ENCODE measurements at regions of chr4 and their contacts with region 1.

Region 1: GRCh38 chr4:99563310-99564186 is at the start of gene TRMT10A:
- DNase-seq: peak; percentile 98
- ATAC-seq: peak; percentile 89
- H3K4me3 Mint-ChIP-seq: peak within 1 kb of the TSS; percentile 90
- H3K27ac Mint-ChIP-seq: peak within 1 kb of the TSS; percentile 98
- H3K4me1 Mint-ChIP-seq: peaks cover 8% of the 10 kb centered on the region
- H3K27me3 Mint-ChIP-seq: peaks cover 12% of the 10 kb centered on the region
- CTCF ChIP-seq: no peak
- total RNA-seq, gene TRMT10A: 7.7 to 8.0 TPM

Region 2: DNA sequence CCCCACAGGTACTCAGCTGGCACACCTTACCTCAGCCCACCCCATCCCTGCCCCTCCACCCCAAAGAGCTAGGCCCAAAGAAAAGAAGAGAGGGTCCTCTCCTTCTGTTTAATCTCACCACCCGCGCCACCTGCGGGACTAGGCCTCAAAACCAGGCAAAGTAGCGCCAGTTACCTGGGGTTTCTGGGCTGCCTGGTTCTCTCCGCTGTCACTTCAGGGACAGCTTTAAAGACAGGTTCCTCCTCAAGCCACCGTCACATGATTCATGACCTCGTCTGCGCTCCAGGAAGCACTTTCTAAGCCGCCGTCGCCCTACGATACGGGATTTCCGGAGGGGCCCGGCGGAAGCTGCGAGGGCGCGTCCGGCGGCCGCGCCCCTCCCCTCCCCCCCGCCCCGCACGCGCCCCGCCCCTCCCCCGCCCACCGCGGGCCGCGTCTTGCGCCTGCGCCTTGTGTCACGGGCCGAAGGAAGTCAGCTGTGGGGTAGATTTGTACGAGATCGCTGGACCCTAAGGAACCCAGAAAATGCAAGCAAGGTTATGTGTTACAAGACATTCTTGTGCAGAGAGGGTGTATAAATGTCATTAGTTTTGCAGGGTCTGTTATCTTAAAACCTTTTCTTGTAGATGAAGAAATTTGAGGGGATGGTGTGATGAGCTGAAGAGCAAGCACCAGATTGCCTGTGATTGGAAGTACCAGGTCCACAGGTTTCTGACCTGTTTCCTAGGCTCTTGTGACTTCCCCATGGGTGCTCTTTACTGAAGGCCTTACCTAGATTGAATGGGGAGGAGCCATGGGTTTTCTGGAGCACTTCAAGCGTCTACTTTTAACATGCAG is 330.8 kb after region 1 on chr4 and contains the start of gene LAMTOR3:
- CTCF ChIA-PET with region 1: interaction called, 3 read pairs
- POLR2A ChIA-PET with region 1: interaction called, 3 read pairs
- intact Hi-C with region 1: loop called (anchors 5 kb)
- DNase-seq: peak; percentile 92
- ATAC-seq: peak; percentile 98
- H3K4me3 Mint-ChIP-seq: peak within 1 kb of the TSS; percentile 95
- H3K27ac Mint-ChIP-seq: peak within 1 kb of the TSS; percentile 93
- H3K4me1 Mint-ChIP-seq: peaks cover 34% of the 10 kb centered on the region
- H3K27me3 Mint-ChIP-seq: no peaks in the 10 kb centered on the region
- CTCF ChIP-seq: no peak
- total RNA-seq, gene LAMTOR3: 23.2 to 23.5 TPM